CD8-positive, alpha-beta T cell (primary cell): ENCODE measurements at regions of chr9 and their contacts with region 1.

Region 1: DNA sequence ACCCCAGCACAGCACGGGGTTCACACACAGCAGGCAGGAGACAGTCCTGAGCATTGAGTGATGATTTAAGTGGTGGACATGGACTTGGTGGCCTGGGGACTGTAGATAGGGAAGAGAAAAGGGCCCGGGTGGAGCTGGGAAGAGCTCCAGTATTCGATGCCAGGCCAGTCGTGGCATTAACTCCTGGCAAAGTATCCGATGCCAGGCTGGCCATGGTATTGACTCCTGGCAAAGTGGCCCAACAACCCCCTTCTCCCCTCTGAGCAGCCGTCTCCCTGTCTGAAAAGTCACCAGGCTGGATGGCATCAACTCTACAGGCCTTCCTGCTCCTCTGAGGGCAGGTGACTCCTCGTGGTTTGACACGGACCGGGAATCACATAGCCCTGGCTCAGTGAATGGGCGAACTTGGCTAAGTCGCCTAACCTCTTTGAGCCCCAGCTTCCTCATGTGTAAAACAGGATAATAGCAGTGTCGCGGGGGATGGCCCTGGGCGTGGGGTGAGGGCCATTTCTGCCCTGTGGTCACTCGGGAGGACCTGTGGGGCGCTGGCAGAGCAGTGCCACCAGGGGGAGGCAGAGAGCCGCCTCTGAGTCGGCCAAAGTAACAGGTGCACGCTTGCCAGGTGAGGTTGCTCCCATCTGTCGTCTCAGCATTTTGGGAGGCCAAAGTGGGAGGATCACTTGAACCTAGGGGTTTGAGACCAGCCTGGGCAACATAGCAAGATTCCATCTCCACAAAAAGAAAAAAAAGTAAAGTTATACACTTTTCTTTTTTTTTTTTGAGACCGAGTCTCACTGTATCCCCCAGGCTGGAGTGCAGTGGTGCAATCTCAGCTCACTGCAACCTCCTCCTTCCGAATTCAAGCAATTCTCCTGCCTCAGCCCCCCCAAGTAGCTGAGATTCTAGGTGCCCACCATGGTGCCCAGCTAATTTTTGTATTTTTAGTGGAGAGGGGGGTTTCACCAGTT is 5.7 kb upstream of the SEC16A start:
- DNase-seq: peak; percentile 61 to 87 (median 78)
- ATAC-seq: peak; percentile 58
- H3K4me3 ChIP-seq: no peak overlapping the region
- H3K4me3 Mint-ChIP-seq: no peak overlapping the region
- H3K27ac ChIP-seq: no peak overlapping the region
- H3K27ac Mint-ChIP-seq: no peak overlapping the region
- H3K4me1 ChIP-seq: peaks cover 10% of the 10 kb centered on the region
- H3K4me1 Mint-ChIP-seq: peaks cover 6% of the 10 kb centered on the region
- H3K27me3 ChIP-seq: no peaks in the 10 kb centered on the region
- H3K27me3 Mint-ChIP-seq: no peaks in the 10 kb centered on the region
- CTCF ChIP-seq: peak; percentile 97

Region 2: GRCh38 chr9:136539427-136540421 is 51.2 kb after region 1 on chr9:
- CTCF ChIA-PET with region 1: interaction called, 16 read pairs
- POLR2A ChIA-PET with region 1: interaction called, 8 read pairs
- intact Hi-C with region 1: loop called in 1 of 2 experiments (anchors 1 kb)
- DNase-seq: peak; percentile 49 to 94 (median 86)
- ATAC-seq: peak; percentile 70
- H3K4me3 ChIP-seq: peak overlapping the region; percentile 30 to 58
- H3K4me3 Mint-ChIP-seq: peak overlapping the region; percentile 85
- H3K27ac ChIP-seq: peak overlapping the region; percentile 73 to 95
- H3K27ac Mint-ChIP-seq: peak overlapping the region; percentile 97
- H3K4me1 ChIP-seq: peaks cover 80% of the 10 kb centered on the region
- H3K4me1 Mint-ChIP-seq: peaks cover 59% of the 10 kb centered on the region
- H3K27me3 ChIP-seq: no peaks in the 10 kb centered on the region
- H3K27me3 Mint-ChIP-seq: no peaks in the 10 kb centered on the region
- CTCF ChIP-seq: no peak

Region 3: GRCh38 chr9:136564379-136564988 is 76.0 kb after region 1 on chr9:
- CTCF ChIA-PET with region 1: interaction called, 10 read pairs
- POLR2A ChIA-PET with region 1: no interaction called
- intact Hi-C with region 1: no loop called
- DNase-seq: peak in 3 of 9 experiments; percentile 2 to 51 (median 35)
- ATAC-seq: no peak
- H3K4me3 ChIP-seq: no peak overlapping the region
- H3K4me3 Mint-ChIP-seq: no peak overlapping the region
- H3K27ac ChIP-seq: no peak overlapping the region
- H3K27ac Mint-ChIP-seq: no peak overlapping the region
- H3K4me1 ChIP-seq: peaks cover 9% of the 10 kb centered on the region
- H3K4me1 Mint-ChIP-seq: no peaks in the 10 kb centered on the region
- H3K27me3 ChIP-seq: no peaks in the 10 kb centered on the region
- H3K27me3 Mint-ChIP-seq: no peaks in the 10 kb centered on the region
- CTCF ChIP-seq: no peak

Region 4: DNA sequence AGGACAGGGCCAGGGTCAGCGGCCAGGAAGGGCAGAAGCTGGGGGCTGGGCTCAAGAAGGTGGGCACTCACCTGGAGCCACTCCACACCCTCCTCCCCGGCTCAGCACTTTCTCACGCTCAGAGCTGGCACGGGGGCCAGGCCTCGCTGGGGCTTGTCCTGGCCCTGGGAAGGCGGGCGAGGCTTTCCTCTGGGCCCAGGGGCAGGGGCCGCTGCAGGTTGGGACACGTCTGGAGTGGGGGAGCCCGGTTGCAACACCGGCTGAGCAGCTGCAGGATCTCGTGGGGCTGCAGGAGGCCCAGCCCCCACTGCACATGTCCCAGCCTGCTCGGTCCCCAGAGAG is 135.3 kb after region 1 on chr9:
- CTCF ChIA-PET with region 1: interaction called, 181 read pairs
- POLR2A ChIA-PET with region 1: interaction called, 3 read pairs
- intact Hi-C with region 1: no loop called
- DNase-seq: no peak
- ATAC-seq: no peak
- H3K4me3 ChIP-seq: no peak overlapping the region
- H3K4me3 Mint-ChIP-seq: no peak overlapping the region
- H3K27ac ChIP-seq: no peak overlapping the region
- H3K27ac Mint-ChIP-seq: no peak overlapping the region
- H3K4me1 ChIP-seq: peaks cover 10% of the 10 kb centered on the region
- H3K4me1 Mint-ChIP-seq: no peaks in the 10 kb centered on the region
- H3K27me3 ChIP-seq: no peaks in the 10 kb centered on the region
- H3K27me3 Mint-ChIP-seq: peaks cover 5% of the 10 kb centered on the region
- CTCF ChIP-seq: no peak

Region 5: DNA sequence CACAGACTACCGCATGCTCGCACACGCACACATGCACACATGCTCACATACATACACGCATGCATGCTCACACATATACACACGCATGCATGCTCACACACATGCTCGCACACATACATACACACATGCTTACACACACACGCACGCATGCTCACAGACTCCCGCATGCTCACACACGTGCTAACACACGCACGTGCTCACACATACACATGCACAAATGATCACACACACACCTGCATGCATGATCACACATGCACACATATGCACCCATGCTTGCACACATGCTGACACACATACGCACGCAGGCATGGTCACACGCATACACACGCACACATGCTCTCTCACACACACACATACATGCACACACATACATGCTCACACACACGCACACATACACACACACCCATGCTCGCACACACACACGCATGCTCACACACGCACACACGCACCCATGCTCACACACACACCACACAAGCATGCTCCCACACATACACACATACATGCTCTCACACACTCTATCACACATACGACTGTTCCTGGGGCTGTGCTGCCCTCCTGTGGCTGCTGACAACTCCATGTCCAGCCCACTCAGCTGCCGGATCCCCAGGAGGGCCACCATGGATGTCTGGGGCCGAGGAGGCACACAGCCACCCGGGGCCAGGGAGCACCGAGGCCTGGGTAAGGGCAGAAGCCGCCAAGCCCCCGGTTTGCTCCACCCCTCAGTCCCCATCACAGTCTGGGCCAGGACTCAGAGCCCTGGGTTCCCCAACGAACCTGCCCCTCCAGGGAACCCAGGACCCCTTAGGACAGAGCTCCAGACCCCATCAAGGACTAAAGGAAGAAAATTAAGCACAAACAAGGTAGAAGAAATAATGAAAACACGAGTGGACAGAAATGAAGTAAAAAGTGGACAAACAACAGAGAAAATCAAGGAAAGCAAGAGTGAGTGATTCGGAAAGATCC is 142.8 kb after region 1 on chr9:
- CTCF ChIA-PET with region 1: interaction called, 181 read pairs
- POLR2A ChIA-PET with region 1: interaction called, 4 read pairs
- intact Hi-C with region 1: loop called (anchors 1 kb)
- DNase-seq: peak; percentile 63 to 89 (median 83)
- ATAC-seq: peak; percentile 89
- H3K4me3 ChIP-seq: no peak overlapping the region
- H3K4me3 Mint-ChIP-seq: no peak overlapping the region
- H3K27ac ChIP-seq: peak overlapping the region in 1 of 2 experiments; percentile 40
- H3K27ac Mint-ChIP-seq: no peak overlapping the region
- H3K4me1 ChIP-seq: peaks cover 12% of the 10 kb centered on the region
- H3K4me1 Mint-ChIP-seq: no peaks in the 10 kb centered on the region
- H3K27me3 ChIP-seq: peaks cover 0 to 2% of the 10 kb centered on the region in 2 experiments
- H3K27me3 Mint-ChIP-seq: peaks cover 3% of the 10 kb centered on the region
- CTCF ChIP-seq: peak; percentile 81

Region 6: DNA sequence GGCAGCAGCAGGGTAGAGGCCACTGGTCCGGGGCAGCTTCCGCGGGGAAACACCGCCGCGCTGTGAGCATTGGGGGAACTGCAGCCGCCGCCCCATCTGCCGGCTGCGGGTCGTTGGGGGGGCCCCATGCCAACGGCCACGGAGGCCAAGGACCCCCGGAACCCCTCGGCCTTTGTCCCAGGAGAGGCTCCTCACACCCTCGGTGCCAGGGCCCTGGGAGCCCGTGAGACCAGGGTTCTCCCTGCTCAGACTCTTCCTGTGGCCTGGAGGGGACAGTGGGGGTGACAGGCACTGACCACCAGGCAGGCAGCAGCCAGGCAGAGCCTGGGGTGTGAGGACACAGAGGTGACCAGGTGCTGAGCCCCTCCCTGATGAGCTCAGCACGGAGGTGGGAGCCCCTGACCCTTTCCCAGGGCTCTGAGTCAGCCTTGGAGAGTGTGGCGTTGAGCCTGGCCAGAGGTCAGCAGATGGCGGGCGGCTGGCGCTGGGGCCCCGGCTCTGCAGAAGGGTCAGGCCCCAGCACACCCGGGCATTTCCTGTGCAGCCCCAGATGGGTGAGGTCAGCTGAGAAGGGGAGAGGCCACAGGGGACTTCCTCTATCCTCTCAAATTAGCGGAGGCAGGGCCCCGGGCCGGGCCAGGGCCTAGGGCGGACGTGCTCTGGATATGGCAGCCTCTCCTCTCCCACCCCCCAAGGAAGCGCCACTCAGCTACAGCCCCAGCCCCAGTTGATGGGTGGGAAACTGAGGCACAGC is 156.2 kb after region 1 on chr9:
- CTCF ChIA-PET with region 1: interaction called, 52 read pairs
- POLR2A ChIA-PET with region 1: no interaction called
- intact Hi-C with region 1: loop called (anchors 1 kb)
- DNase-seq: peak in 8 of 9 experiments; percentile 47 to 81 (median 70)
- ATAC-seq: peak; percentile 99
- H3K4me3 ChIP-seq: no peak overlapping the region
- H3K4me3 Mint-ChIP-seq: no peak overlapping the region
- H3K27ac ChIP-seq: no peak overlapping the region
- H3K27ac Mint-ChIP-seq: no peak overlapping the region
- H3K4me1 ChIP-seq: peaks cover 10% of the 10 kb centered on the region
- H3K4me1 Mint-ChIP-seq: no peaks in the 10 kb centered on the region
- H3K27me3 ChIP-seq: peaks cover 12 to 30% of the 10 kb centered on the region in 2 experiments
- H3K27me3 Mint-ChIP-seq: peaks cover 28% of the 10 kb centered on the region
- CTCF ChIP-seq: peak; percentile 82